ENCODE measurements at regions of chr12 and their contacts with region 1.

Region 1: GRCh38 chr12:110468212-110469048 is at the starts of genes FAM216A and GPN3:
- DNase-seq: peak; percentile 98
- H3K4me3 Mint-ChIP-seq: peak within 1 kb of the TSS; percentile 98
- H3K27ac Mint-ChIP-seq: peak within 1 kb of the TSS; percentile 97
- H3K4me1 Mint-ChIP-seq: peaks cover 28% of the 10 kb centered on the region
- H3K27me3 Mint-ChIP-seq: no peaks in the 10 kb centered on the region
- total RNA-seq, gene FAM216A: 29.8 to 30.0 TPM
- total RNA-seq, gene GPN3: 62.4 to 68.4 TPM

Region 2: DNA sequence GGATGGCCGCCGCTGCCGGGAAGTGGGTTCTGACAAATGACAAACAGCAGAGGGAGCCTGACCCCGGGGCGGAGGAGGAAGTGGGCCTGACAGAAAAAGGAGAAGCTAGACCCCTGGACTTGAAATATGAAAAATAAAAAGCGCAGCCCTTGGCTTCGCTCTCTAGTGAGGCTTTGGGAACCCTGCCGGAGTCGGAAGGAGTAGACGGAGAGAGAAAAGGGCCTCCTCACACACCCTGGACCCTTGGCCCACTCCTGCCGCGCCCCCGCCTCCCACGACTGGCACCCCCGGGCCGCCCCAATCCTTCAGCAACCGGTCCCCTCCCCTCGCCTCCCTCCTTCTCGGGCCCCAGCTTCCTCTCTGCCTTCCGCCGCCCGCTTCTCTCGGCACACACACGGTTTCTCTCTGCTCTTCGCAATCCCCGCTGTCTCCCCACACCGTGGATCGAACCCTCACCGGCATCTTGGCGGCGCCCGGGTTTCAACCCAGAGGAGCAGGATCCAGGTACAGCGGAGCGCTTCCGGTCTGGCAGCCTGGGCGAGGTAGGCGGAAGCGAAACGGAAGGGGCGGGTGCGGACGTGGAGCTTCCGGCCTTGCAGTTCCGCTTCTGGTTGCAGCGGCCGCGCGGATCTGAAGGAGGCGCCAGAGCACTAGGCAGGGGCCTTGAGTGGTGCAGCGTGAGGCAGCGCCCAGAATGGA is 18.5 kb before region 1 on chr12 and contains the start of gene ARPC3:
- CTCF ChIA-PET with region 1: interaction called, 79 read pairs
- POLR2A ChIA-PET with region 1: interaction called, 28 read pairs
- intact Hi-C with region 1: loop called (anchors 1 kb)
- DNase-seq: peak; percentile 97
- H3K4me3 Mint-ChIP-seq: peak within 1 kb of the TSS; percentile 100
- H3K27ac Mint-ChIP-seq: peak within 1 kb of the TSS; percentile 99
- H3K4me1 Mint-ChIP-seq: peaks cover 35% of the 10 kb centered on the region
- H3K27me3 Mint-ChIP-seq: no peaks in the 10 kb centered on the region
- total RNA-seq, gene ARPC3: 340 to 352 TPM

Region 3: DNA sequence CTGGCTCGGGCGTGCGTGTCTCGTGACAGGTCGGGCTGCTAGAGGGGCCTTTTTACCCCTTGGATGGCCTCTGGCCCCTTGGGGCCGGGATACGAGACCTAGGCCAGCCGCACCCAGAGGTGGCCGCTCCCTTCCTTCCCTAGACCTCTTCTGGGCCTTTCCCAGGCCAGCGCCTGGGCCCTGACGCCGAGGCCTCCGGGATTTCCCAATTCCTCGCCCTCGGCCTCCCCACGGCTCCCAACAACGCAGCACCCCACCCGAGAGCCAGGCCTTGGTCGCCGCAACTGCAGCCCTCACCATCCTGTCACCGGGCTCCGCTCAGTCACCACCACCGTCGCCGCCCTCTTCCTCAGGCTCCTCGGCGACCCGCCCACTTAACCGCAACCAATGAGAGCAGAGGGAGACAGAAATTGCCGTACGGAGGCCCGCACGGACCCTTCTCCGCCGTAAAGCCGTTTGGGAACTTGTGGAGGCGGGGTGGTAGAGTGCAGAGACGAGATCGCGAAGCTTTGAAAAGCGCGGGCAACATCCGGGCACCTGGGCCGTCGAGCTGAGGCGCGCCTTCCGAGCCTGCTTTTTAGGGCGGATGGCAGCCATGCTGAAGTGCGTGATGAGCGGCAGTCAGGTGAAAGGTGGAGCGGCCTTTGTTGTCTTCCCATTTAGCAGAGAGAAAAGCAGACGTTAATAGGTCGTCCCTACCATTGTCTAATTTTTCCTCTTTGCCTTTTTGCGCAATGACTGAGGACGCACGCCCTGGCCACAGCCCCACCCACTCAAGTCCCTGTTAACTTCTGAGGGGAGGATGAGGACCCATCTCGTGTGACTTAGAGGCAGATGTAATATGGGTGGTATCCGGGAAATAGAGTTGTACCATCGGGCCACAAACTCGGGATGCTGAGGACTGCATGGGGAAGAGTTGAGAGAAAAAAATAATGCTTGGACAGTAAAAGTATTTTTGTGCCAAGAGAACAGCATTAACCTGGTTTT is 33.6 kb after region 1 on chr12 and contains the starts of genes RAD9B and VPS29:
- CTCF ChIA-PET with region 1: interaction called, 40 read pairs
- POLR2A ChIA-PET with region 1: interaction called, 33 read pairs
- intact Hi-C with region 1: loop called (anchors 1 kb)
- DNase-seq: peak; percentile 100
- H3K4me3 Mint-ChIP-seq: peak within 1 kb of the TSS; percentile 99
- H3K27ac Mint-ChIP-seq: peak within 1 kb of the TSS; percentile 97
- H3K4me1 Mint-ChIP-seq: peaks cover 30% of the 10 kb centered on the region
- H3K27me3 Mint-ChIP-seq: no peaks in the 10 kb centered on the region
- total RNA-seq, gene RAD9B: 1.1 to 2.7 TPM
- total RNA-seq, gene VPS29: 100 to 106 TPM

Region 4: GRCh38 chr12:110583137-110584059 is 115.0 kb after region 1 on chr12 and contains the start of gene PPTC7:
- CTCF ChIA-PET with region 1: interaction called, 4 read pairs
- POLR2A ChIA-PET with region 1: interaction called, 15 read pairs
- intact Hi-C with region 1: loop called (anchors 1 kb)
- DNase-seq: peak; percentile 99
- H3K4me3 Mint-ChIP-seq: peak within 1 kb of the TSS; percentile 94
- H3K27ac Mint-ChIP-seq: peak within 1 kb of the TSS; percentile 94
- H3K4me1 Mint-ChIP-seq: peaks cover 59% of the 10 kb centered on the region
- H3K27me3 Mint-ChIP-seq: no peaks in the 10 kb centered on the region
- total RNA-seq, gene PPTC7: 36.9 to 37.0 TPM

Region 5: DNA sequence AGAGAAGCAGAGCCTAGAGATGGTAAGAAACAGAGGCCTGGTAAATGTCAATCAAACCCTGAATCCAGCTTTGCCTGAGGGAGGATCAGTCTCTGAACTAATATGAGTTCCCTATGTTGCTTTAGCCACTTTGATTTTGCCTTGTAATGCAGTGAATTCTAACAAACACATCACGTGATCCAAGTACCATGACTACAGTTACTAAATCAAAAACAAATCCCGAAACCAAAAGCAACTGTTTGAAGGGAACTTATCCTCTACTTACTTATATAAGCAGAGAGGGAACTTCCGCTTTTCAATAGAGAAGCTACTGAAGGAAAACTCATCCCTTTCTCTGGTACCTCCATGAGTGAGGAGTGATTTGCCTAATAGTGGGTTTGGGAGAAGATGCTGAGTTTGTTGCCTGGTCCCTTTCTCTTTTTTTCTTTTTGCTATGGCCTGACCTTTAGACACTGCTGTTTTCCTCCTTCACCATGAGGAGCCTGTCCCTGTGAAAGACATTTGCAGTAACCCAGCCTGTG is 122.4 kb after region 1 on chr12:
- CTCF ChIA-PET with region 1: interaction called, 6 read pairs
- POLR2A ChIA-PET with region 1: interaction called, 11 read pairs
- intact Hi-C with region 1: no loop called
- DNase-seq: peak; percentile 7
- H3K4me3 Mint-ChIP-seq: peak overlapping the region; percentile 55
- H3K27ac Mint-ChIP-seq: peak overlapping the region; percentile 93
- H3K4me1 Mint-ChIP-seq: peaks cover 25% of the 10 kb centered on the region
- H3K27me3 Mint-ChIP-seq: no peaks in the 10 kb centered on the region

Region 6: DNA sequence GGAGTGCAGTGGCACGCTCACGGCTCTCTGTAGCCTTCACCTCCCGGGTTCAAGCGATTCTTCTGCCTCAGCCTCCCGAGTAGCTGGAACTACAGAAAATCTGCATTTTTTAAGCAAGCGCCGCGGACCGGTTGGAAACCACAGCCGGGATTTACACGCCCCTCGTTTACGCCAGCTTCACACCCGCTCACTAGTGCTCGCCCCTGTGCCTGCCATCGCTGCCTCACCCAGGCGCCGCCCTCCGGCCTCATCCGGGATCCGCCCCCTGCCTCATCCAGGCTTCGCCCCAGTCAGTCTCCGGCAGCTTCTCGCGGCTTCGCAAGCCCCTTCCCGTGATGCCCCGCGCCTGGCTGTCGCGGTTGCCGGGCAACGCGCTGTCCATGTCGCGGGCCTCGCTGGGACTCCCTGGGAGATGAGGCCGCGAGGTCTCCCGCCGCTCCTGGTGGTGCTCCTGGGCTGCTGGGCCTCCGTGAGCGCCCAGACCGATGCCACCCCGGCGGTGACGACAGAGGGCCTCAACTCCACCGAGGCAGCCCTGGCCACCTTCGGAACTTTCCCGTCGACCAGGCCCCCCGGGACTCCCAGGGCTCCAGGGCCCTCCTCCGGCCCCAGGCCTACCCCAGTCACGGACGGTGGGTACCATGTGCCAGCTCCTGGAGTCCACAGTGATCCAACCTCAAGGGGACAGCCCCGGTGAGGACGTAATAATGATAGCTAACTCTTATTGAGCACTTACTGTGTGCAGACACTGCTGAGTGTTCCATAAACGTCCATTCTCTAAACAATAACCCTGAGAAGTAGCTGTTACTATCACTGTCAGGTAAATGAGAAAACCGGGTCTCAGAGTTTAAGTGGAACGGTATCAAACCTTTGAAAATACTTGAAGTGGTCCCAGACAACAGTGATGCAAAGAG is 145.6 kb after region 1 on chr12 and contains the start of gene TCTN1:
- CTCF ChIA-PET with region 1: interaction called, 11 read pairs
- POLR2A ChIA-PET with region 1: interaction called, 10 read pairs
- intact Hi-C with region 1: no loop called
- DNase-seq: peak; percentile 99
- H3K4me3 Mint-ChIP-seq: peak within 1 kb of the TSS; percentile 85
- H3K27ac Mint-ChIP-seq: peak within 1 kb of the TSS; percentile 54
- H3K4me1 Mint-ChIP-seq: peaks cover 9% of the 10 kb centered on the region
- H3K27me3 Mint-ChIP-seq: no peaks in the 10 kb centered on the region
- total RNA-seq, gene TCTN1: 6.4 to 7.6 TPM

Region 7: GRCh38 chr12:110742718-110743570 is 274.5 kb after region 1 on chr12 and contains the start of gene PPP1CC:
- CTCF ChIA-PET with region 1: interaction called, 3 read pairs
- POLR2A ChIA-PET with region 1: interaction called, 3 read pairs
- intact Hi-C with region 1: loop called (anchors 2 kb)
- DNase-seq: peak; percentile 94
- H3K4me3 Mint-ChIP-seq: peak within 1 kb of the TSS; percentile 99
- H3K27ac Mint-ChIP-seq: peak within 1 kb of the TSS; percentile 99
- H3K4me1 Mint-ChIP-seq: peaks cover 34% of the 10 kb centered on the region
- H3K27me3 Mint-ChIP-seq: no peaks in the 10 kb centered on the region
- total RNA-seq, gene PPP1CC: 334 to 343 TPM